Esophagus squamous epithelium (tissue), 5 donors: ENCODE measurements at regions of chr7 and their contacts with region 1.

Region 1: GRCh38 chr7:149662591-149663095 is 110.7 kb downstream of the ZNF467 start:
- DNase-seq: no peak
- H3K4me3 ChIP-seq: no peak overlapping the region
- H3K27ac ChIP-seq: peak overlapping the region in 1 of 4 donors; percentile 29
- H3K4me1 ChIP-seq: peaks cover 0 to 6% (median 0%) of the 10 kb centered on the region in 3 donors
- H3K27me3 ChIP-seq: peaks cover 0 to 15% (median 0%) of the 10 kb centered on the region in 4 donors
- CTCF ChIP-seq: peak in 5 of 6 experiments; percentile 38 to 65 (median 50)
- POLR2A ChIP-seq: no peak

Region 2: GRCh38 chr7:148738737-148739535 is 923.7 kb before region 1 on chr7:
- intact Hi-C with region 1: no loop called
- DNase-seq: no peak
- H3K4me3 ChIP-seq: no peak overlapping the region
- H3K27ac ChIP-seq: no peak overlapping the region
- H3K4me1 ChIP-seq: peaks cover 0 to 5% (median 0%) of the 10 kb centered on the region in 3 donors
- H3K27me3 ChIP-seq: no peaks in the 10 kb centered on the region
- CTCF ChIP-seq: no peak
- POLR2A ChIP-seq: no peak

Region 3: DNA sequence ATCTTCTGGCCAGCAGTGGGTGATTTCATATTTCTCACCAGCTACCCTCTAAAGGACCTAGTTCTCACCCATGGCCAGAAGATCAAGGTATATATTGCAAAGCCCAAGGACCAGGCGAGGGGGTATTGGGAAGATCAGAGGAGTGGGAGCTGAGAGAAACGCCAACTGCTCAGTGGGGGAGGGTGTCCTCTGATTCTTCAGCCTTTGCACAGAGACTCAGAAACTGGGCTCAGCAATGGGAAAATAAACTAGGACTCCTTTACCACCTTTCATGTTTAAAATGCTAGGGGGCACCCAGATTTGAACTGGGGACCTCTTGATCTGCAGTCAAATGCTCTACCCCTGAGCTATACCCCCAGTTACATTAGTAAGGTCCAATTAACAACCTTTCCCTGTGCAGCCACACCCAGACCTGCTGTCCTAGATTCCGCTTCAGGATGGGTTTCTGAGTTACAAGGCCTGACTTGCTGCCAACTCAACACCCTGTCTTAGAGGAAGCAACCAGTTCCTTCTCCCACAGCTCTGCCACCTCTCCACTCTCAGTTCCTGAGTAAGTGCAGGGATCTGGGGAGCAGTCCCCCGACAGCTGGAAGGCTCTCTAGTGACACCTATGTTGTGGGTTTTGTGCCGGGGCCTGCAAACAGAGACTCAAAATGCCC is 307.1 kb before region 1 on chr7:
- intact Hi-C with region 1: no loop called
- DNase-seq: no peak
- H3K4me3 ChIP-seq: no peak overlapping the region
- H3K27ac ChIP-seq: no peak overlapping the region
- H3K4me1 ChIP-seq: peaks cover 0 to 6% (median 0%) of the 10 kb centered on the region in 3 donors
- H3K27me3 ChIP-seq: no peaks in the 10 kb centered on the region
- CTCF ChIP-seq: no peak
- POLR2A ChIP-seq: no peak

Region 4: DNA sequence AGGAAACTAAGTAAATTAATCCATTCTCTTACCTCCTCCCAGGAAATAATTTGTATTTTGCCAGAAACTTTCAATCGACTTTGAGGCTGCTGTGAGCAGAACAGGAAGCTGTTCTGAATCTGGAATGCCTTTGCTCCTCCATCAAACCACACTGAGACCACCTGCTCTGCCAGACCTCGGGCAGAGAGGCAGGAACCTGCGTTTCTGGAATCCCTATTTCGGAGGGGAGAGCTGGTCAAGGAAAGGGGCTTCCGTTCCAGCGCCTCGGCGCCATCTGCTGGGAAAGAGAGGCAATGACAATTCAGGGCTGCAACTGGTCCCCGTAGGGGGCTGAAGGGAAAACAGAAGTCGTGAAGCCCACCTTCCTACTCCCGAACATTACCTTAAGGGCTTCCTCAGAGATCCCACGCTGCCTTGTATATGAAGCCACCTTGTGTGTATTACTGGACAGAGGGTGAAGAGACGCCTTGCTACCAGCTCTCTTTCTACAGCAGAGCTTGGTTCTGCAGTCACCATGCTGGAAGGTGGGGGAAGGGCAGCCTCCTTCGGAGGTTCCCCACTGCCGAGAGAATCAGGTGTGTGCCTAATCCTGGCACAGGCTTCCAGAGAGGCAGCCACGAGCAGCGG is 79.5 kb after region 1 on chr7:
- intact Hi-C with region 1: loop called (anchors 10 kb)
- DNase-seq: no peak
- H3K4me3 ChIP-seq: peak overlapping the region in 3 of 4 donors; percentile 25 to 45 (median 26)
- H3K27ac ChIP-seq: no peak overlapping the region
- H3K4me1 ChIP-seq: peaks cover 4 to 12% (median 10%) of the 10 kb centered on the region in 3 donors
- H3K27me3 ChIP-seq: peaks cover 0 to 34% (median 0%) of the 10 kb centered on the region in 4 donors
- CTCF ChIP-seq: peak; percentile 64 to 92 (median 80)
- POLR2A ChIP-seq: no peak